ENCODE measurements at regions of chr4 and their contacts with region 1.

Region 1: DNA sequence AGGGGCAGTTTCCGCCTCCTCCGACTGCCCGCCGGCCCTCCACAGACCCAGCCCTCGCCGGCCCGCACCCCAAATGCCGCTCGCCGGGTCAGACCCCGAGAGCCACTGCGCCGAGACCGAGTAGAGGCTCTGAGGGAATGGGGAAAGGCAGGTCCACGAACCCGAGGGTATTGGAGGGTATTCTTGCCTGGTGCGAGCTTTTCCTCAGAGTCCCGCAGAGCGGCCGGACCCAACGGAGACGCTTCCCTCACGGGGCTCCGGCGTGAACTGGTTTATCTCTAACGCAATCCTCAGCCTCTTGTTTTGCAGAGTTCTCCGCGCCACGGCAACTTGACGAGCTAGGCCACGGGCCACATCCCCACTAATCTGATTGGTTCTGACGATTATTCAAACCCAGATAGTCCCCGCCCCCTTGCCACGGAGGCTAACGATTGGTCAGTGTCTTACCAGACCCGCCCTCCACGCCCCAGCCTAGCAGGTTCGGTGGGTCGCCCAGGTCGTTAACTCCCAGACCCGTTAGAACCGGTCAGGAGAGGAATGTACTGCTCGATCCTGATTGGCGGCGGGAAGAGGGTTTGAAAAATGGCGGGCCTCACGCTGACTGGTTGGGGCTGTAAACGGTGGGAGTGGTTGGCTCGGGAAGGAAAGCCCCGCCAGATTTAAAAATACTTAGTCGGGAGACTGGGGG is at the start of gene HMGB2:
- DNase-seq: peak; percentile 99 to 100
- H3K4me3 ChIP-seq: peak within 1 kb of the TSS; percentile 84
- H3K4me3 Mint-ChIP-seq: peak within 1 kb of the TSS; percentile 86
- H3K27ac Mint-ChIP-seq: peak within 1 kb of the TSS; percentile 98
- H3K4me1 ChIP-seq: peaks cover 14% of the 10 kb centered on the region
- H3K4me1 Mint-ChIP-seq: peaks cover 15% of the 10 kb centered on the region
- H3K27me3 ChIP-seq: no peaks in the 10 kb centered on the region
- H3K27me3 Mint-ChIP-seq: no peaks in the 10 kb centered on the region
- CTCF ChIP-seq: no peak
- total RNA-seq, gene HMGB2: 272 and 326 TPM in 2 replicates

Region 2: GRCh38 chr4:173168396-173169177 is 165.6 kb before region 1 on chr4 and contains the start of gene GALNT7:
- CTCF ChIA-PET with region 1: no interaction called
- POLR2A ChIA-PET with region 1: interaction called, 12 read pairs
- intact Hi-C with region 1: no loop called
- DNase-seq: peak; percentile 80 to 83
- H3K4me3 ChIP-seq: peak within 1 kb of the TSS; percentile 58
- H3K4me3 Mint-ChIP-seq: peak within 1 kb of the TSS; percentile 90
- H3K27ac Mint-ChIP-seq: peak within 1 kb of the TSS; percentile 85
- H3K4me1 ChIP-seq: peaks cover 8% of the 10 kb centered on the region; the same call in 1 of the 2 replicates
- H3K4me1 Mint-ChIP-seq: no peaks in the 10 kb centered on the region
- H3K27me3 ChIP-seq: no peaks in the 10 kb centered on the region
- H3K27me3 Mint-ChIP-seq: no peaks in the 10 kb centered on the region
- CTCF ChIP-seq: no peak
- total RNA-seq, gene GALNT7: 16.8 and 17.4 TPM in 2 replicates

Region 3: DNA sequence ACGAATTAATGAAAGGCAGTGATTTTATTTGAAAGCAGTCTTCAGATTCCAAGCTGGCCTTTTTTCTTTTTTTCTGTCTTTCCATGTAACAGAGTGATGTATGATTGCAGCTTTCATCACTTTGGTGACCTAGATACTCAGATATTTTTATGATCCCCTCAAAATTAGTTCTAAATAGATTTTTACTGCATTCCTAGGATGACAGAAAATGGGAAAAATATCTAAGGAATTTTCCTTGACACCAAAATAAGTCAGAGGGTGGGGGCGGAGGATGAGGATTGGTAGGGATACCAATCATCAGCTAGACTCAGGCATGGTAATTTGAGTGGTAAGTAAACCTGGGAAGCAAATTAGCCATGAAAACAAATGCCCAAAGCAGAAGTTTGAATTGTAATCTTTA is 11.8 kb after region 1 on chr4:
- CTCF ChIA-PET with region 1: interaction called, 3 read pairs
- POLR2A ChIA-PET with region 1: interaction called, 21 read pairs
- intact Hi-C with region 1: loop called (anchors 1 kb)
- DNase-seq: peak; percentile 16 to 40
- H3K4me3 ChIP-seq: no peak overlapping the region
- H3K4me3 Mint-ChIP-seq: no peak overlapping the region
- H3K27ac Mint-ChIP-seq: peak overlapping the region; percentile 29
- H3K4me1 ChIP-seq: peaks cover 22% of the 10 kb centered on the region; the same call in 1 of the 2 replicates
- H3K4me1 Mint-ChIP-seq: peaks cover 17% of the 10 kb centered on the region
- H3K27me3 ChIP-seq: no peaks in the 10 kb centered on the region
- H3K27me3 Mint-ChIP-seq: no peaks in the 10 kb centered on the region
- CTCF ChIP-seq: no peak

Region 4: DNA sequence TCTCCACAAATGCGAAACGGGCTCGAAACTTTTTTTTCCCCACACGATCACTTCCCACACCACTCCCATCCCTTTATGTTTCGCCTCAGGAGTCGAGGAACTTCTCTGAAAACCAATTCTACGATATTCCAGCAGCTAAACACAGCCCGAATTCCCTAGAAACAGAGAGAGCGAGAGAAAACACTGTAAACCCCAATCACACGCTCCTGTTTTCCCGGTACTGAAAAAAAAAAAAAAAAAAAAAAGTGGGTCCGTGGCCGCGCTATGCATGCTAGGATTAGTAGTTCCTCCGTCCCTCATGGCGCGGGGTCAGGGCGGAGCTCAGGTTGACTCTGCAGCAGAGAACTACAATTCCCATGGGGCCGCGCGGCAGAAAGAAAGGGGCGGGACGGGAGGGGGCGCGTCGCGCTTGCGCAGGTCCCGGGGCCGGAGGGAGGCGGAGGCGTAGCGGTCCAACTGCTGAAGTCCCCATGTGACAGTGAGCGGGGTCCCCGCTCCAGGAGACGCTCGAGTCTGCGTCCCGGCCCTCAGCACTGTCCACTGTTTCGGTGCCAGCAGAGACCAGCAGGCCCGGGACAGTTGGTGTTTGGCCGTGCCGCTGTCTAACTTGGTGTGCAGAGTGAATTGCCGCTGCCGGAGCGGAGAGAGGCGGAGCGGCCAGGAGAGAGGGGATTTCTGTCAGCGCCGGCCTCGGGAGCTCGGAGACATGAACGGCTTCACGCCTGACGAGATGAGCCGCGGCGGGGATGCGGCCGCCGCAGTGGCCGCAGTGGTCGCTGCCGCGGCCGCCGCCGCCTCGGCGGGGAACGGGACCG is 36.5 kb after region 1 on chr4 and contains the start of gene SAP30:
- CTCF ChIA-PET with region 1: interaction called, 20 read pairs
- POLR2A ChIA-PET with region 1: interaction called, 113 read pairs
- intact Hi-C with region 1: loop called (anchors 1 kb)
- DNase-seq: peak; percentile 93 to 96
- H3K4me3 ChIP-seq: peak within 1 kb of the TSS; percentile 93
- H3K4me3 Mint-ChIP-seq: peak within 1 kb of the TSS; percentile 85
- H3K27ac Mint-ChIP-seq: peak within 1 kb of the TSS; percentile 83
- H3K4me1 ChIP-seq: 0 out of 2 replicates have a peak, but pooled peaks cover 3% of the 10 kb centered on the region
- H3K4me1 Mint-ChIP-seq: peaks cover 6% of the 10 kb centered on the region
- H3K27me3 ChIP-seq: no peaks in the 10 kb centered on the region
- H3K27me3 Mint-ChIP-seq: peaks cover 2% of the 10 kb centered on the region
- CTCF ChIP-seq: no peak
- total RNA-seq, gene SAP30: 9.4 and 9.8 TPM in 2 replicates

Region 5: GRCh38 chr4:173436149-173436579 is 101.9 kb after region 1 on chr4:
- CTCF ChIA-PET with region 1: no interaction called
- POLR2A ChIA-PET with region 1: no interaction called
- intact Hi-C with region 1: no loop called
- DNase-seq: no peak
- H3K4me3 ChIP-seq: no peak overlapping the region
- H3K4me3 Mint-ChIP-seq: no peak overlapping the region
- H3K27ac Mint-ChIP-seq: no peak overlapping the region
- H3K4me1 ChIP-seq: no peaks in the 10 kb centered on the region
- H3K4me1 Mint-ChIP-seq: no peaks in the 10 kb centered on the region
- H3K27me3 ChIP-seq: no peaks in the 10 kb centered on the region
- H3K27me3 Mint-ChIP-seq: no peaks in the 10 kb centered on the region
- CTCF ChIP-seq: no peak

Region 6: DNA sequence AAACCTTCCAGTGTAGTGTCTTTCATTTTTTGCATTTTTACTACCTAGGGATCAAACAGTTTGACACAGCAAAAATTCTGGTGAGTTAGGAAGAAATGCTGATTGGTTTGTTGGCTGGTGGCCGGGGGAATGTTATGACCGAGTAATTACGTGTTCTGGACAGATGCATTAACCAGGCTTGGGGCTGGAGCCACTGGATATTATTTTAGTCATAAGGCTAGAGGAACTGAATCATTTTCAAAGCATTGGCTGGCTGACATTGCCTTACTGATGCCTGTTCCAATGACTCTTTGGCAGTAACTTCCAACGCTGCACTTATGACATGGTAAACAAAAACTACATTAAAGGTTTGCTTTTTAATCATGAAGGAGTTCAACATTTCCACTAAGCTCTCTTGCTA is 864.6 kb after region 1 on chr4:
- CTCF ChIA-PET with region 1: no interaction called
- POLR2A ChIA-PET with region 1: no interaction called
- intact Hi-C with region 1: loop called (anchors 10 kb)
- DNase-seq: no peak
- H3K4me3 ChIP-seq: no peak overlapping the region
- H3K4me3 Mint-ChIP-seq: no peak overlapping the region
- H3K27ac Mint-ChIP-seq: no peak overlapping the region
- H3K4me1 ChIP-seq: peaks cover 17% of the 10 kb centered on the region
- H3K4me1 Mint-ChIP-seq: no peaks in the 10 kb centered on the region
- H3K27me3 ChIP-seq: no peaks in the 10 kb centered on the region
- H3K27me3 Mint-ChIP-seq: no peaks in the 10 kb centered on the region
- CTCF ChIP-seq: no peak